Posterior vena cava (tissue), 2 donors: ENCODE measurements at regions of chr10 and their contacts with region 1.

Region 1: GRCh38 chr10:132319853-132320669 is 11.9 kb upstream of the LRRC27 start:
- DNase-seq: no peak

Region 2: GRCh38 chr10:131972474-131973071 is 347.5 kb before region 1 on chr10:
- intact Hi-C with region 1: no loop called
- DNase-seq: peak; percentile 80

Region 3: GRCh38 chr10:132257271-132257670 is 62.8 kb before region 1 on chr10:
- intact Hi-C with region 1: no loop called
- DNase-seq: no peak

Region 4: DNA sequence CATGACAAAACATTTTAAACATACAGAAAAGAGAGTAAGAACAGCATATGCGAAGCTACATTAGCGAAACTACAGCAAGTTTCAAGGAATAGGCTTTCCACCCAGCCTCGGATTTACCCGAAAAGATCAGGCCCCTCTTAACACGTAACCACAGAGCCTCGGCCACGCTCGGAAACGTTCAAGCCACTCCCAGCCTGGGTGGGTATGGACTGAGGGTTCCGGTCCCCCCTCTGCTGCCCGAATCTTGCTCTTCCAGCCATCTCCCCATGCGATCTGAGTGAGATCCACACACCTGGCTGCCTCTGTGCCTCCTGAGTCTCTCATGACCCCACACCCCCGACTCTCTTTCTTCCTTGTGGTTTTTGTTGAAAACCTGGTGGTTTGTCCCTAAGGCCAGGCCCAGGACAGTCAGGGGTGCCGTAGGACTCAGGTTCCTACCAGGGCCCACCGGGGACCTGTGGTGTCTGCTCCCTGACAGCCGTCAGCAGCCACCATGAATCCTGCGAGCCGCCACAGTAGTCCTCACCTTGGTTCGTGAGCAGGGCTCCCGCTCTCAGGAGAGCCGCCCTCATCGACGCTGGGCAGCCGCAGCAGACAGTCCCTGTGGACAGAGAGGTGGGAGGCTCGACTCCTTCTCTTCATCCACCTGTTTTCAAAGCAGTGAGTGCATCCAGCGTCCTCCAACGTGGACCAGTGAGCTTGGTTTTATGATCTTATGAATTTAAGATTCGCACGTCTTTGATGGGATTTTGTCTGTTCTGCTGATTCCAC is 858.5 kb after region 1 on chr10:
- intact Hi-C with region 1: loop called in 1 of 2 experiments (anchors 5 kb)
- DNase-seq: peak; percentile 69